RWPE1 (cell line): ENCODE measurements at regions of chr1 and their contacts with region 1.

Region 1: GRCh38 chr1:201792534-201793305 is 36.2 kb upstream of the IPO9 start:
- DNase-seq: peak; percentile 88
- H3K27ac ChIP-seq: peak overlapping the region; percentile 75
- CTCF ChIP-seq: peak; percentile 96

Region 2: DNA sequence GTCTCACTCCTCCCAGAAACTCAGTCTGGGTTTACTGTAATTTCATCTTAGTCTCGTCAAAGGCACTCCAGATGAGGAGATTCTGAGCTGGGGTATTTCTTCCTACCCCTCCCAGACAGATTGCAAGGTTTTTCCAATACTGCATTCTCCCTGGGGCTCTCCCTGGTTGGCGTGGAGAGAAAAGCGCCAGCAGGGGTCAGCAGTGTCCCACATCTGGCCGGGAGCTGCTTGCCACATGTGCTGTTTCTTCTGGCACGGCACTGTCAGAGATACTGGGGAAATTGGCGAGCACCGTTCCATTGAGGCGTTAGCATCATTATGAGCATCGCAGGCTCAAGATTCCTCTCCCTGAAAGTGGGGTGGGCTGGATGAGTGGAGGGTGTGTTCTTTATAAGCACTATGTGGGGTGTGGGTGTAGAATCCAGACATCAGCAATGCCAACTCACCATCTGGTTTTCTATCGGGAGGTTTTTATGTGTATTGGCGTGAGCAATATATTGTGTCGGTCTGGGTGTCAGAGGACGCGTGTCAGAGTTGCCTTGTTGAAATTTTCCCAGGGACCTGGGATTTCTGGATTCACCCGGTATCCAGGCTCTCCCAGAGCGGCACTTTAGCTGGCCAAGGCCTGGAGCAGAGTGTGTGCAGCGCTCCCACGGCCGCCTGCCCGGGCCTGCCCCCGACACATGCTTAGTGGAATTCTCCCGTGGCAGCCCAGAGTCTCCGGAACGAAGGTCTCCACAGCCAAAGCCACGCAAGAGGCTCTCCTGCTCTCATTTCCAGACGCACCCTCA is 261.8 kb before region 1 on chr1:
- CTCF ChIA-PET with region 1: interaction called, 19 read pairs
- POLR2A ChIA-PET with region 1: no interaction called
- DNase-seq: peak; percentile 78
- H3K27ac ChIP-seq: no peak overlapping the region
- CTCF ChIP-seq: peak; percentile 84

Region 3: DNA sequence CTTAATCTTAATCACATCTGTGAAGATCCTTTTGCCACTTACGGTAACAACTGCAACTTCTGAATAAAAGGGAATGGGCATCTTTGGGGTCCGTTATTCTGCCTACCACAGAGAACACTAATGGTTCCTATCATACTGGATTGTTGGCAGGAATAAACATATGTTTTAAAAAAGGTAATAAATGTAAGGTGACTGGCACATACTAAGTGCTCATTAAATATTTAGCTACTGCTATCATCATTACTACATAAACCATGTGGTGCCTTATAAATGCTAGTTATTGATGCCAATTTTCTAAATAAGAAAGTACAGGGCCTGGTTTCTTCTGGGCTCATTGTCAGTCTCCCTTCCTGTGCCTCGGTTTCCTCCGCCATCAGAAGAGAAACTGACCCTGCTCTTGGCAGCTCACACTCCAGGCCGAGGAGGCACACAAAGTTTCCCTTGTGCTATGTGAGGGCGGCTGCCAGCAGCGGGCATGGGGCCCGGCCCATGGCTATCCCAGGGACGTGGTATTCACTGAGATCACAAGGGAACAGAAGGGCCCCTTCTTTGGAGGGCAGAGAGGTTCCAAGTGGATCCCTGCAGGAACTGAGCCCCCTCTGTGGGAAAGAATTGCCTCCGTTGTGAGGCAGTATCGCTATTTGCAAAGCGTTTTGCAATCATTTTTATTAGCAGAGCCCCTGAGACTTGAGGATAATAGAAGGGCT is 227.5 kb before region 1 on chr1:
- CTCF ChIA-PET with region 1: interaction called, 119 read pairs
- POLR2A ChIA-PET with region 1: no interaction called
- DNase-seq: no peak
- H3K27ac ChIP-seq: peak overlapping the region; percentile 10; the same call in 1 of the 2 replicates
- CTCF ChIP-seq: no peak

Region 4: GRCh38 chr1:201649761-201650622 is 142.7 kb before region 1 on chr1:
- CTCF ChIA-PET with region 1: interaction called, 11 read pairs
- POLR2A ChIA-PET with region 1: interaction called, 3 read pairs
- DNase-seq: peak; percentile 87
- H3K27ac ChIP-seq: peak overlapping the region; percentile 97
- CTCF ChIP-seq: no peak

Region 5: DNA sequence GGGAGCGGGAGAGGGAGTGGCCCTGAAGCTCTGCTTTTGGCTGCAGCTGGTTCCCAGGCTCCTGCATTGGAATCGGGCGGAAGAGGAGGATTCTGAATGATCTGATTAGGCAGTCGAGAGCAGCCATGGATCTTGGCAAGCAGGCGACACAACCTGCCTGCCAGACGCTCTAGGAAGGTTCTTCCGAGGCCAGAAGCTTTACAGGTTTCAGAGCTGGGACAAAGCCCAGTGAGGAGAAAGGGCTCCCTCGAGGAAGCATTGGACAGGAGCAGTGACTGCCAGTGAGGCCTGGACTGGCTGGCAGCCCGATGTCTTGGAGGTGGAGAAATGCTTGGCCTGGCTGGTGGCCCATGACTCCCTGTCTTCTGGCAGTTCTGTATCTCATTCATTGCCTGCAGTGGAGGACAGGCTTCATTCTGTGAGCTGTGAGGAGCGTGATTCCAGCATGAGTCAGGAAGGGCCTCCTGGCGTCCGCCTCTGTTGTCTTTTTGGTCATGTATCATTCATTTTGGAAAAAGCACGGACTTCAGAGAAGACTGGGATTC is 96.4 kb before region 1 on chr1:
- CTCF ChIA-PET with region 1: interaction called, 11 read pairs
- POLR2A ChIA-PET with region 1: no interaction called
- DNase-seq: peak; percentile 88
- H3K27ac ChIP-seq: peak overlapping the region; percentile 93
- CTCF ChIP-seq: no peak

Region 6: GRCh38 chr1:201719812-201720521 is 72.8 kb before region 1 on chr1:
- CTCF ChIA-PET with region 1: interaction called, 351 read pairs
- POLR2A ChIA-PET with region 1: no interaction called
- DNase-seq: no peak
- H3K27ac ChIP-seq: peak overlapping the region; percentile 69
- CTCF ChIP-seq: no peak

Region 7: DNA sequence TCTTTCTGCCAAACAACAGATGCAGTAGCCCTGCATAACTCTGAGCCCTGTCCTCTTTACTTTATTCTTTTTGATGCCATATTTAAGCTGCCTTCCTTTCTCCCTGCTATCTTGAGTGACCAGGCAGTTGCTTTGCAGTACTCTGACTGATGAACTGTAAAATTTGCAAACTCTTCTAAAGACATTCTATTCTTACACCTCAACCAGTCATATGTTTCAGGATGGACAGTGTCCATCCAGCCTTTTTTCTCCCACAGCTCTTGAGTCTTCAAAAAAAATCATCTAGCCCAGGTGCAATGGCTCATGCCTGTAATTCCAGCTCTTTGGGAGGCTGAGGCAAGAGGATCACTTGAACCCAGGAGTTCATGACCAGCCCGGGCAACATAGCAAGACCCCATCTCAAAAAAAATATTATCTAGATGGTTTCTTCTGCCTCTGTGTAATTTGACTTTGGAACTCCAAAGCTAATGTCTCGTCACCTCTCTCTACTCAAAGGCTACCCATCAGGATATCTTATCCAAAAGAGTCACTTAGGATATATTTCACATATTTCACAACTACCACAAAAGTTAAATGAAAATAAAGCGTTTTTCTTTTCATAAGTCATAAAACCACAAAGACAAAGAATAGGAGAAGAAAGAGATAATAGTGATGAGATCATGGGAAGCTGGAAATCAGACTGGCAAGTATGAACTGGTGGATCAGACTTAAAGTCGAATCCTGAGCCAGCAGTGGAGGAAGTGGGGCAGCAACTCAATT is 18.3 kb before region 1 on chr1:
- CTCF ChIA-PET with region 1: interaction called, 10 read pairs
- POLR2A ChIA-PET with region 1: no interaction called
- DNase-seq: no peak
- H3K27ac ChIP-seq: no peak overlapping the region
- CTCF ChIP-seq: no peak